CD8-positive, alpha-beta T cell (primary cell): ENCODE measurements at regions of chr16 and their contacts with region 1.

Region 1: DNA sequence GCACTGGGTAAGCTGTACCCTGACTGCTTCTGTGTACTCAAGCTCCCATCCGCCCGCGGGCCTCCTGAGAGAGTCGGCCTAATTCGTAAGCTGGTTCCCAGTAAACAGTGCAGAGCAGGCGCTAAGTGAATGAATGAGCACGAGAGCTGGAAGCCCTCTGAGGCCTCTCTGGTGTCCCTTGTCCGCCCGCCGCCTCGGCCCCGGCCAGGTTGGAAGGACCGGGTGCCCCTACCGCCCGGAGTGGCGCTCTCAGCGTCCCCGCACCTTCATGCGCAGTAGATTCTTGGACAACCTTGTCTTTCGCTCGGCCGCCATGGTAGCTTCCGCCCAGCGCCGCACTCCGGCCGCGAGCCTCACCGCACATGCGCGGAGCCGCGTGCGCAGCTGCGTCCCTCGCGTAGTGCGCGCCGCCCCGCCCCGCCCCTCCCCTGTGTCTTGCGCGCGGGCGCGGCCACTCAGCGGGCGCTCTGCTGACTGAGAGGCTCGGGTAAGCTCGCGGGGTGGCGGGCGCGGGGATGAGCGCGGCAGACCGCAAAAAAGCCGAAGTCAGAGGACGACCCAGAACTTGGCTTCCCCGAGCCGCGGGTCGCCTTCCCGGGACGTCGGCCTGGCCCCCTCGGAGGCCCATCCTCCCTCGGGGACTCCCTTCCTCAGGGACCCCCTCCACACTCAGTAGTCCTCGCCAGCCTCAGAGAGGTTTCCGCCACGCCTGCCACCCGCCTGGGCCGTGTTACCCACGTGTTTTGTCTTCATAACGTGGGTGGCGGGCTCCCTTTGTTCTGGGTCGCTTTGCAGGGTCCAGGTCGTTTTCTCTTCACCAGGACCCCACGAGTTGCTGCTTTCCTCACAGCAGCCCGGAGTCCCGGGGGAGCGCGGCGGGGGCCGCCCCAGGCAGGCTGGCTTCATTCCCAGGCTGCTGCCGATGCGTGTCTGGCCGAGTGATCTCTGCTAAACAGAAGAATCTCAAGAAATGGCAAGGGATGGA is at the start of gene MPHOSPH6:
- DNase-seq: peak; percentile 77 to 95 (median 90)
- ATAC-seq: peak; percentile 94
- H3K4me3 ChIP-seq: peak within 1 kb of the TSS; percentile 85 to 95
- H3K4me3 Mint-ChIP-seq: peak within 1 kb of the TSS; percentile 96
- H3K27ac ChIP-seq: peak within 1 kb of the TSS; percentile 82 to 90
- H3K27ac Mint-ChIP-seq: peak within 1 kb of the TSS; percentile 97
- H3K4me1 ChIP-seq: peaks cover 15% of the 10 kb centered on the region
- H3K4me1 Mint-ChIP-seq: peaks cover 36% of the 10 kb centered on the region
- H3K27me3 ChIP-seq: no peaks in the 10 kb centered on the region
- H3K27me3 Mint-ChIP-seq: peaks cover 3% of the 10 kb centered on the region
- CTCF ChIP-seq: no peak
- total RNA-seq, gene MPHOSPH6: 19.5 to 24.1 TPM

Region 2: DNA sequence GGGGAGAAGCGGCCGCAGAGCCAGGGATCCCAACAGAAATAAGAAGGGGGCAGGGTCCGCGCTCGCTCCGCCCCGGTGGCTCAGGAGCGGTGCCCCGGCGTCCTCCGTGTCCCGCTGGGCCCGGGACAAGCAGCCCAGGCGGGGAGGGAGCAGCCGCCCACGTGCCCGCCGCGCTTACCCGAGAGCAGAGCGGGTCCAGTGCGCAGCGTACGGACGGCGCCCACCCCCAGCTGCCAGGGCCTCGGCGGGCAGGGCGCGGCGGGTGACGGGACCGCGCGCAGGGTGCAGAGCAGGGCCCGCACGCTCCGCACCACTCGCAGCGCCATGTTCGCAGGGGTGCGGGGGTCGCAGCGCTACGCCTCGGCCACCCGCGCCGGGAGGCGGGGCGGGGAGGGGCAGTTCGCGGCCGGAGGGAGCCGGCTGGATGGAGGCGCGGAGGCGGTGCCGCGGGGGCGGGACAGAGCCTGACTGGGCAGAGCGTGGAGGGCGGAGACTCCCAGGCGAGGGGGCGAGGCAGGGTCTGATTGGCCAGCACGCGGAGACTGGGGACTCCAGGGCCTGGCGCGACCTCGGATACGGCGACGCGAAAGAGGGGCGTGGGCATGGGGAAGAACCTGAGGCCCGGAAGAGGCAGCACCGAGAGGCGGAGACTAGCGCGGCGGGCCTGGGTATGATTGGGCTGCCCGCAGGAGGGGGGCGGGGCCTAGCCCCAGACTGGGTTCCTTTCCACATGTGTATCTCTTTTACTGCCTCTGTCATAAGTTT is 1074.0 kb before region 1 on chr16 and contains the start of gene GCSH:
- CTCF ChIA-PET with region 1: no interaction called
- POLR2A ChIA-PET with region 1: no interaction called
- intact Hi-C with region 1: loop called in 1 of 2 experiments (anchors 5 kb)
- DNase-seq: peak; percentile 94 to 100 (median 98)
- ATAC-seq: peak; percentile 97
- H3K4me3 ChIP-seq: peak within 1 kb of the TSS; percentile 59 to 71
- H3K4me3 Mint-ChIP-seq: peak within 1 kb of the TSS; percentile 88
- H3K27ac ChIP-seq: peak within 1 kb of the TSS; percentile 43 to 58
- H3K27ac Mint-ChIP-seq: peak within 1 kb of the TSS; percentile 49
- H3K4me1 ChIP-seq: peaks cover 7% of the 10 kb centered on the region
- H3K4me1 Mint-ChIP-seq: peaks cover 14% of the 10 kb centered on the region
- H3K27me3 ChIP-seq: no peaks in the 10 kb centered on the region
- H3K27me3 Mint-ChIP-seq: no peaks in the 10 kb centered on the region
- CTCF ChIP-seq: no peak
- total RNA-seq, gene GCSH: 2.5 to 2.8 TPM

Region 3: GRCh38 chr16:81973737-81974136 is 196.4 kb before region 1 on chr16:
- CTCF ChIA-PET with region 1: no interaction called
- POLR2A ChIA-PET with region 1: no interaction called
- intact Hi-C with region 1: no loop called
- DNase-seq: no peak
- ATAC-seq: no peak
- H3K4me3 ChIP-seq: no peak overlapping the region
- H3K4me3 Mint-ChIP-seq: no peak overlapping the region
- H3K27ac ChIP-seq: no peak overlapping the region
- H3K27ac Mint-ChIP-seq: no peak overlapping the region
- H3K4me1 ChIP-seq: no peaks in the 10 kb centered on the region
- H3K4me1 Mint-ChIP-seq: no peaks in the 10 kb centered on the region
- H3K27me3 ChIP-seq: peaks cover 0 to 2% of the 10 kb centered on the region in 2 experiments
- H3K27me3 Mint-ChIP-seq: peaks cover 15% of the 10 kb centered on the region
- CTCF ChIP-seq: no peak

Region 4: DNA sequence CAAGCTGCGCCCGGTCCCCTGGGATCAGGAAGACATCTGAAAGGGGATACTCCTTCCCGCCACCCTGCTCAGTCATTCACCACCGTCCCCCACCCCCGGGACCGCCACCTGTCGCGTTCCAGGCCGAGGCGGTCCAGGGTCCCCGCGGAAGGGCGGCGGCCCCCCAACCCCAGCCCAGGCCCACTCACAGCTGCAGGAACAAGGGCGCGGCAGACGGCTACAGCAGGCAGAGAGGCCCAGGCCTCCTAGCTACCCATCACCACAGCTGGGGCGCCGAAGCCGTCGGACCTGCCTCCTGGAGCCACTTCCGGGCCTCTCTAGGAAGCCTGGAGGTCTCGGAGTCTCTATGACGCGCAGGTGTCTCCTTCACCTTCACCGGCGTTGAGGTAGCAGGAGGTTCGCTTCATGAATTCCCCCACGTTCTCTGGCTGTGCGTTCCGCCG is 158.9 kb before region 1 on chr16 and contains the start of gene SDR42E1:
- CTCF ChIA-PET with region 1: no interaction called
- POLR2A ChIA-PET with region 1: no interaction called
- intact Hi-C with region 1: loop called (anchors 1 to 2 kb)
- DNase-seq: peak; percentile 10 to 84 (median 71)
- ATAC-seq: peak; percentile 93
- H3K4me3 ChIP-seq: peak within 1 kb of the TSS; percentile 65 to 71
- H3K4me3 Mint-ChIP-seq: peak within 1 kb of the TSS; percentile 92
- H3K27ac ChIP-seq: peak within 1 kb of the TSS; percentile 26 to 34
- H3K27ac Mint-ChIP-seq: peak within 1 kb of the TSS; percentile 92
- H3K4me1 ChIP-seq: peaks cover 12% of the 10 kb centered on the region
- H3K4me1 Mint-ChIP-seq: peaks cover 28% of the 10 kb centered on the region
- H3K27me3 ChIP-seq: no peaks in the 10 kb centered on the region
- H3K27me3 Mint-ChIP-seq: peaks cover 21% of the 10 kb centered on the region
- CTCF ChIP-seq: no peak
- total RNA-seq, gene SDR42E1: 5.6 to 6.7 TPM